Sciatic nerve (tissue), 2 donors: ENCODE measurements at regions of chr9 and their contacts with region 1.

Region 1: DNA sequence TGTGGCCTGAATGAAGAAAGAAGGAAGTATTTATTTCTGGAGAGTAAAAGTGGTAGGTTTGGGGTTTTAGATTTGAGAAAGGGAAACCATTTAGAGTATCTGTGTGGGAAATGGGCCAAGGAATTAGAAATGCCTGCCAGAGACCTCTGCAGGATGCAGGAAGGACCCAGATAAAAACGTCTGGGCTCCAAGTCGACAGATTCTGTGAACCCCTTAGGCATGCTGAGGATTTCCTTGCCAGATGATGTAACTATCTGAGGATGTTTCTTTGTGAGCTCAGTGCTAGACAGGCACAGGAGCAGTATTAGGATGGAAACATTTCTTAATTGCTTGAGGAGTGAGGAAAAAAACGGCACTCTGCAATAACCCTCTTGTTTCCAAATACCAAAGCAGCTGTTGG is 251.8 kb upstream of the DMRT1 start:
- DNase-seq: no peak
- ATAC-seq: peak; percentile 74

Region 2: GRCh38 chr9:469672-470551 is 119.8 kb before region 1 on chr9:
- intact Hi-C with region 1: loop called (anchors 10 kb)
- DNase-seq: peak; percentile 93
- ATAC-seq: peak; percentile 98

Region 3: GRCh38 chr9:684054-684890 is 94.5 kb after region 1 on chr9:
- intact Hi-C with region 1: no loop called
- DNase-seq: no peak
- ATAC-seq: peak; percentile 62

Region 4: DNA sequence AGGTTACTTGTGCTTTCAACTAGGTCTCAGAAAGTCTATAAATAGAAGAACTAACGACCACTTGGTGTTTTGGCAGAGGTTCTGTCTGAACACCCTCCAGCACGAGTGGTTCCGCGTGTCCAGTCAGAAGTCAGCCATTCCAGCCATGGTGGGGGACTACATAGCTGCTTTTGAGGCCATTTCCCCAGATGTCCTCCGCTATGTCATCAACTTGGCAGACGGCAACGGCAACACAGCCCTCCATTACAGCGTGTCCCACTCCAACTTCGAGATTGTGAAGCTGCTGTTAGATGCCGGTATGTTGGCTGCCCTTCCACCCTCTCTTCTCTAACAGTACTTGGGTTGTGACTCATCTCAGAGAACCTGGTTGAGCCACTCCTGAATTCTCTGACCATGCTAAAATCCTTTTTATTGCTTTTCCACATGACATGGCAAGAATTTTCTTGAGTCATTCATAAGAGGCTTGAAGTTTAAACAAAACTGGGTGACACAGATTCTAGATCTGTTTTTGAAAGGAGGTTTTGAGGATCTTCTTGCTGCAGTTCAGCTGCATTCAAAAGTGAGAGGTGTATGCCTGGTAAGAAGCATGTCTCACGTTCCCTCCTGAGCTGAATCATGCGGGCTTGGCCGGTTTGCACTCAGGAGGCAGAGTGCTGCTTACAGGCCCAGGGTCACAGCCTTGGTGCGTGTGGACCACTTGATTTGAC is 148.6 kb after region 1 on chr9:
- intact Hi-C with region 1: no loop called
- DNase-seq: no peak
- ATAC-seq: peak; percentile 30